Tibial artery (tissue), 4 donors: ENCODE measurements at regions of chr6 and their contacts with region 1.

Region 1: DNA sequence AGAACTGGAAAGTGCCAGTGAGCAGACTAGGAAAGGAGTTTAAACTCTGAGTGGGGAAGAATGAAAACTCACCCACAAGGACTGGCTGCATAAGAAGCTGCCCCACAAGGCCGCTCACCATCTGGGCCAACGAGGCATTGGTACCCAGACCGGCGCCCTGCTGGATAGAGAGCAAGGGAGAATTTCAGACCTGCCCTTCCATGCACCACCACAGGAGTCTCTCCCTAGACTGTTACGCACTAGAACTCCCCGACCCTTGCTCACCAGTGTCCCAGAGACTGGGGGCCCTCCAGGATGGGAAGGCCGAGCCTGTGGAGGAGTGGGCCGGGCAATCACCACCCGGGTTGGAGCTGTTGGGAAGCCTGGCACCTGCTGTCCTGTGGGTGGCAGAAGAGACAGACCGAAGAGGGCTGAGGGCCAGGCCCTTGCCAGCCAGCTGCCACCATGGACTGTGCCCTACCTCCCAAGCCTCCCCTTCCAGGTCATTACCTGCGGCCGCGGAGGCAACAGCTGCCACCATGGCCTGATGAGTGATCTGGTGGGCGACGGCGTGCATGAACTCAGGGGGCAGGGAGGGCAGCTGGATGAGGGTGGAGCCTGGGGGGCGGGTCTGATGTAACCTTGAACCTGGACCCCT is 8.5 kb downstream of the BAG6 start:
- DNase-seq: no peak
- H3K4me3 ChIP-seq: no peak overlapping the region
- H3K27ac ChIP-seq: no peak overlapping the region
- H3K4me1 ChIP-seq: no peaks in the 10 kb centered on the region
- H3K27me3 ChIP-seq: no peaks in the 10 kb centered on the region
- CTCF ChIP-seq: no peak

Region 2: DNA sequence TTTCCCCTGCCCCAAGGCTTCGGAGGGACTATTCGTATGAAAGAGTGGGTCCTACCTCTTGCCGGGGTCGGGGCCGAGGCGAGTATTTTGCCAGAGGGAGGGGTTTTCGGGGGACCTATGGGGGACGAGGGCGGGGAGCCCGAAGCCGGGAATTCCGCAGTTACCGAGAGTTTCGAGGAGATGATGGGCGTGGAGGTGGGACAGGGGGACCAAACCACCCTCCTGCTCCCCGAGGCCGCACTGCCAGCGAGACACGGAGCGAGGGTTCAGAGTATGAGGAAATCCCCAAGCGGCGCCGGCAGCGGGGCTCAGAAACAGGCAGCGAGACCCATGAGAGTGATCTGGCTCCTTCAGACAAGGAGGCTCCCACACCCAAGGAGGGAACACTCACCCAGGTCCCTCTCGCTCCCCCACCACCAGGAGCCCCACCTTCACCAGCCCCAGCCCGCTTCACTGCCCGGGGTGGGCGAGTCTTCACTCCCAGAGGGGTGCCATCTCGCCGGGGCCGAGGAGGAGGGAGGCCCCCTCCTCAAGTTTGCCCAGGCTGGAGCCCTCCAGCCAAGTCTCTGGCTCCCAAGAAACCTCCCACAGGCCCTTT is 12.2 kb before region 1 on chr6:
- intact Hi-C with region 1: no loop called
- DNase-seq: no peak
- H3K4me3 ChIP-seq: no peak overlapping the region
- H3K27ac ChIP-seq: no peak overlapping the region
- H3K4me1 ChIP-seq: peaks cover 0 to 3% (median 0%) of the 10 kb centered on the region in 4 donors
- H3K27me3 ChIP-seq: no peaks in the 10 kb centered on the region
- CTCF ChIP-seq: no peak

Region 3: GRCh38 chr6:32609731-32610640 is 966.0 kb after region 1 on chr6:
- intact Hi-C with region 1: loop called (anchors 5 kb)
- DNase-seq: peak in 1 of 2 donors; percentile 19
- H3K4me3 ChIP-seq: no peak overlapping the region
- H3K27ac ChIP-seq: no peak overlapping the region
- H3K4me1 ChIP-seq: no peaks in the 10 kb centered on the region
- H3K27me3 ChIP-seq: no peaks in the 10 kb centered on the region
- CTCF ChIP-seq: no peak